MCF 10A (cell line): ENCODE measurements at regions of chr7 and their contacts with region 1.

Region 1: GRCh38 chr7:128322040-128322643 is 21.6 kb downstream of the RBM28 start:
- DNase-seq: peak; percentile 56
- H3K4me3 Mint-ChIP-seq: no peak overlapping the region
- H3K27ac Mint-ChIP-seq: no peak overlapping the region
- H3K4me1 Mint-ChIP-seq: no peaks in the 10 kb centered on the region
- H3K27me3 Mint-ChIP-seq: no peaks in the 10 kb centered on the region
- CTCF ChIP-seq: peak; percentile 49

Region 2: DNA sequence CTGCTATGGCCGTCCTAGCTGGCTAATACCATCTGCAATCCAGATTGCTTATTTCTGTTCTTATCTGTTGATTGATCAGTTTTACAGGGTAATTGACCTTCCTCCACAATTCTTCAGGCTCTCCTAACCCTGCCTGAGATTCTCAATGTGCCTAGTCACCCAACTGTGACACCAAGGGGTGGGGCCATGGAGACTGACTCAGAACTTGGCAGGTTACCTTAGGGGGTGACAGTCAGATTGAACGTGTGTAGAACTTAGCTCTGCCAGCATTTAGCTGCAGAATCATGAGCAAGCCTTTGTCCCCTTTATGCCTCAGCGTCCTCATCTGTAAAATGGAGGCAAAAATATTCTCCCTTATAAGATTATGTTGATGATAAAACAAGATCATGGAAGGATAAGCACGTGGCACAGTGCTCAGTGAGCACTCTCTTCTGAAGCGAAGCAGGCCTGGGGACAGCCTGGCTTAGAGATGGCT is 100.2 kb before region 1 on chr7:
- CTCF ChIA-PET with region 1: interaction called, 3 read pairs
- POLR2A ChIA-PET with region 1: no interaction called
- intact Hi-C with region 1: loop called (anchors 1 kb)
- DNase-seq: peak; percentile 75
- H3K4me3 Mint-ChIP-seq: no peak overlapping the region
- H3K27ac Mint-ChIP-seq: no peak overlapping the region
- H3K4me1 Mint-ChIP-seq: peaks cover 36% of the 10 kb centered on the region
- H3K27me3 Mint-ChIP-seq: no peaks in the 10 kb centered on the region
- CTCF ChIP-seq: no peak

Region 3: DNA sequence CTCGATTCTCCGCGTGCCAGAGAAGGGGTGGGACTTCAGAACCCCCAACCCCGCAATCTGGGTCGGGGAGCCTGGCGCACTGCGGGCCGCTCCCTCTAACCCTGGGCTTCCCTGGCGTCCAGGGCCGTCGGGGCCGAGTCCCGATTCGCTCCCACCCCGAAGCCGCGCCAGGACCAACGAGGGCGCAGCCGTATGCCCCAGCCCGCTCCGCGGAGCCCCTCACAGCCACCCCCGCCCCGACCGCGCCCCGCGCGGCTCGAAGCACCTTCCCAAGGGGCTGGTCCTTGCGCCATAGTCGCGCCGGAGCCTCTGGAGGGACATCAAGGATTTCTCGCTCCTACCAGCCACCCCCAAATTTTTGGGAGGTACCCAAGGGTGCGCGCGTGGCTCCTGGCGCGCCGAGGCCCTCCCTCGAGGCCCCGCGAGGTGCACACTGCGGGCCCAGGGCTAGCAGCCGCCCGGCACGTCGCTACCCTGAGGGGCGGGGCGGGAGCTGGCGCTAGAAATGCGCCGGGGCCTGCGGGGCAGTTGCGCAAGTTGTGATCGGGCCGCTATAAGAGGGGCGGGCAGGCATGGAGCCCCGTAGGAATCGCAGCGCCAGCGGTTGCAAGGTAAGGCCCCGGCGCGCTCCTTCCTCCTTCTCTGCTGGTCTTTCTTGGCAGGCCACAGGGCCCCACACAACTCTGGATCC is 81.3 kb before region 1 on chr7 and contains the start of gene LEP:
- CTCF ChIA-PET with region 1: no interaction called
- POLR2A ChIA-PET with region 1: no interaction called
- intact Hi-C with region 1: no loop called
- DNase-seq: no peak
- H3K4me3 Mint-ChIP-seq: no peak within 1 kb of the TSS
- H3K27ac Mint-ChIP-seq: no peak within 1 kb of the TSS
- H3K4me1 Mint-ChIP-seq: peaks cover 10% of the 10 kb centered on the region
- H3K27me3 Mint-ChIP-seq: no peaks in the 10 kb centered on the region
- CTCF ChIP-seq: no peak
- total RNA-seq, gene LEP: not detected in 2 replicates

Region 4: GRCh38 chr7:128307061-128307460 is 15.1 kb before region 1 on chr7:
- CTCF ChIA-PET with region 1: interaction called, 10 read pairs
- POLR2A ChIA-PET with region 1: no interaction called
- intact Hi-C with region 1: no loop called
- DNase-seq: no peak
- H3K4me3 Mint-ChIP-seq: no peak overlapping the region
- H3K27ac Mint-ChIP-seq: no peak overlapping the region
- H3K4me1 Mint-ChIP-seq: no peaks in the 10 kb centered on the region
- H3K27me3 Mint-ChIP-seq: no peaks in the 10 kb centered on the region
- CTCF ChIP-seq: no peak

Region 5: DNA sequence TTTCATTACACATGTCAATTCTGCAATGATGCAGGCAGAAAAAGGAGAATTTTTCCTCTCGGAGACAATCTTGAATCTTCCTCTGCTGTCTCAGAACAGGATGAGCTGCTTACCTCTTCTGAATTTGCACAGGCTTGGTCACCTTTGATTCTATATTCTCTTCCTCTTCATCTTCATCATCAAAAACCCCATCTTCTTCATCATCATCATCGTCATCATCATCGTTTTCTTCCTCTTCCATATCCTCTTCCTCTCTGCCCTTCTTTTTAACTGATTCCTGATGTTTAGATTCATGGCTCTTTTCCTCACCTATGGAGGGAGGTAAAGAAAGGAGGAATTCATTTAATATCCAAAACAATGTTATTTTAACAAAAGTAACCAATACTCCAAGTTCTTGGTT is 13.6 kb after region 1 on chr7:
- CTCF ChIA-PET with region 1: interaction called, 11 read pairs
- POLR2A ChIA-PET with region 1: no interaction called
- intact Hi-C with region 1: no loop called
- DNase-seq: no peak
- H3K4me3 Mint-ChIP-seq: no peak overlapping the region
- H3K27ac Mint-ChIP-seq: no peak overlapping the region
- H3K4me1 Mint-ChIP-seq: no peaks in the 10 kb centered on the region
- H3K27me3 Mint-ChIP-seq: no peaks in the 10 kb centered on the region
- CTCF ChIP-seq: no peak